Naive thymus-derived CD4-positive, alpha-beta T cell (primary cell): ENCODE measurements at regions of chr15 and their contacts with region 1.

Region 1: DNA sequence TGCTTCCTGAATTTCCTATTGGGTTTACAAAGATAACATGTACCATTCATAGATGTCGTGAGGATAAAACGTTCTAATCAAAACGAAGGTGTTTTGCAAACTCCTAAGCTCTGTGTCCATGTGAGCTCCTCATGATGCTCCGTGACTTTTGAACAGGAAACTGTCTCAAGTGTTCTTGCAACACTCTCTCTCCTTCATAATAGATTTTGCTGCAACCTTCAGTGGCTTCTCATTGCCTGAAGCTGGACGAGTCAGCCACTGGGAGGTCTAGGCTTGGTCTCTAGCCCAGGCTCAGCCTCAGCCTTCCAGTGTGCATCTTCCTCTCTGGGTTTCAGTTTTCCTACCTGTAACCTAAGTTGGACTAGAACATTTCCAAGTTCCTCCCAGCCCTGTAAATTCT is 18.7 kb upstream of the BCL2A1 start:
- DNase-seq: no peak
- ATAC-seq: peak; percentile 71
- H3K4me3 ChIP-seq: no peak overlapping the region
- H3K4me3 Mint-ChIP-seq: no peak overlapping the region
- H3K27ac ChIP-seq: no peak overlapping the region
- H3K27ac Mint-ChIP-seq: peak overlapping the region in 1 of 9 donors; percentile 9
- H3K4me1 ChIP-seq: no peaks in the 10 kb centered on the region
- H3K4me1 Mint-ChIP-seq: peaks cover 0 to 7% (median 5%) of the 10 kb centered on the region in 7 donors
- H3K27me3 ChIP-seq: no peaks in the 10 kb centered on the region
- H3K27me3 Mint-ChIP-seq: no peaks in the 10 kb centered on the region

Region 2: GRCh38 chr15:79380755-79381497 is 608.8 kb before region 1 on chr15:
- CTCF ChIA-PET with region 1: interaction called, 14 read pairs
- POLR2A ChIA-PET with region 1: no interaction called
- intact Hi-C with region 1: no loop called
- DNase-seq: peak; percentile 26 to 77 (median 62)
- ATAC-seq: peak; percentile 92
- H3K4me3 ChIP-seq: no peak overlapping the region
- H3K4me3 Mint-ChIP-seq: peak overlapping the region in 1 of 10 donors; percentile 36
- H3K27ac ChIP-seq: no peak overlapping the region
- H3K27ac Mint-ChIP-seq: peak overlapping the region in 2 of 9 donors; percentile 65 to 70
- H3K4me1 ChIP-seq: no peaks in the 10 kb centered on the region
- H3K4me1 Mint-ChIP-seq: peaks cover 0 to 5% (median 0%) of the 10 kb centered on the region in 7 donors
- H3K27me3 ChIP-seq: no peaks in the 10 kb centered on the region
- H3K27me3 Mint-ChIP-seq: no peaks in the 10 kb centered on the region

Region 3: GRCh38 chr15:79394231-79394630 is 595.5 kb before region 1 on chr15:
- CTCF ChIA-PET with region 1: no interaction called
- POLR2A ChIA-PET with region 1: no interaction called
- intact Hi-C with region 1: no loop called
- DNase-seq: no peak
- ATAC-seq: no peak
- H3K4me3 ChIP-seq: no peak overlapping the region
- H3K4me3 Mint-ChIP-seq: no peak overlapping the region
- H3K27ac ChIP-seq: no peak overlapping the region
- H3K27ac Mint-ChIP-seq: no peak overlapping the region
- H3K4me1 ChIP-seq: no peaks in the 10 kb centered on the region
- H3K4me1 Mint-ChIP-seq: no peaks in the 10 kb centered on the region
- H3K27me3 ChIP-seq: no peaks in the 10 kb centered on the region
- H3K27me3 Mint-ChIP-seq: peaks cover 0 to 5% (median 0%) of the 10 kb centered on the region in 5 donors

Region 4: GRCh38 chr15:79769069-79769481 is 220.6 kb before region 1 on chr15:
- CTCF ChIA-PET with region 1: no interaction called
- POLR2A ChIA-PET with region 1: no interaction called
- intact Hi-C with region 1: loop called in 1 of 2 experiments (anchors 1 kb)
- DNase-seq: peak in 1 of 9 donors; percentile 2
- ATAC-seq: no peak
- H3K4me3 ChIP-seq: no peak overlapping the region
- H3K4me3 Mint-ChIP-seq: no peak overlapping the region
- H3K27ac ChIP-seq: no peak overlapping the region
- H3K27ac Mint-ChIP-seq: no peak overlapping the region
- H3K4me1 ChIP-seq: no peaks in the 10 kb centered on the region
- H3K4me1 Mint-ChIP-seq: no peaks in the 10 kb centered on the region
- H3K27me3 ChIP-seq: no peaks in the 10 kb centered on the region
- H3K27me3 Mint-ChIP-seq: peaks cover 10 to 18% (median 16%) of the 10 kb centered on the region in 5 donors

Region 5: GRCh38 chr15:79896637-79897379 is 92.9 kb before region 1 on chr15 and contains the start of gene MTHFS:
- CTCF ChIA-PET with region 1: interaction called, 10 read pairs
- POLR2A ChIA-PET with region 1: interaction called, 27 read pairs
- intact Hi-C with region 1: loop called (anchors 1 kb)
- DNase-seq: peak; percentile 73 to 87 (median 83)
- ATAC-seq: peak; percentile 92
- H3K4me3 ChIP-seq: peak within 1 kb of the TSS; percentile 71
- H3K4me3 Mint-ChIP-seq: peak within 1 kb of the TSS; percentile 91 to 100 (median 99)
- H3K27ac ChIP-seq: peak within 1 kb of the TSS; percentile 92
- H3K27ac Mint-ChIP-seq: peak within 1 kb of the TSS; percentile 97 to 100 (median 100)
- H3K4me1 ChIP-seq: peaks cover 20 to 23% of the 10 kb centered on the region in 2 donors
- H3K4me1 Mint-ChIP-seq: peaks cover 28 to 49% (median 46%) of the 10 kb centered on the region in 7 donors
- H3K27me3 ChIP-seq: no peaks in the 10 kb centered on the region
- H3K27me3 Mint-ChIP-seq: no peaks in the 10 kb centered on the region
- total RNA-seq, gene MTHFS: 15.8 to 31.8 (median 20.3) TPM

Region 6: GRCh38 chr15:79923515-79924395 is 65.9 kb before region 1 on chr15:
- CTCF ChIA-PET with region 1: interaction called, 3 read pairs
- POLR2A ChIA-PET with region 1: interaction called, 5 read pairs
- intact Hi-C with region 1: loop called (anchors 1 kb)
- DNase-seq: peak; percentile 95 to 100 (median 99)
- ATAC-seq: peak; percentile 98
- H3K4me3 ChIP-seq: peak overlapping the region; percentile 98
- H3K4me3 Mint-ChIP-seq: peak overlapping the region; percentile 90 to 98 (median 94)
- H3K27ac ChIP-seq: peak overlapping the region; percentile 96
- H3K27ac Mint-ChIP-seq: peak overlapping the region; percentile 95 to 98 (median 97)
- H3K4me1 ChIP-seq: peaks cover 11 to 14% of the 10 kb centered on the region in 2 donors
- H3K4me1 Mint-ChIP-seq: peaks cover 9 to 30% (median 24%) of the 10 kb centered on the region in 7 donors
- H3K27me3 ChIP-seq: no peaks in the 10 kb centered on the region
- H3K27me3 Mint-ChIP-seq: no peaks in the 10 kb centered on the region

Region 7: GRCh38 chr15:79970624-79971434 is 18.9 kb before region 1 on chr15 and contains the start of gene BCL2A1:
- CTCF ChIA-PET with region 1: no interaction called
- POLR2A ChIA-PET with region 1: interaction called, 6 read pairs
- intact Hi-C with region 1: loop called (anchors 1 kb)
- DNase-seq: peak; percentile 30 to 85 (median 80)
- ATAC-seq: peak; percentile 91
- H3K4me3 ChIP-seq: peak within 1 kb of the TSS; percentile 81
- H3K4me3 Mint-ChIP-seq: peak within 1 kb of the TSS; percentile 88 to 98 (median 94)
- H3K27ac ChIP-seq: peak within 1 kb of the TSS; percentile 75
- H3K27ac Mint-ChIP-seq: peak within 1 kb of the TSS; percentile 93 to 99 (median 95)
- H3K4me1 ChIP-seq: peaks cover 27 to 39% of the 10 kb centered on the region in 2 donors
- H3K4me1 Mint-ChIP-seq: peaks cover 41 to 66% (median 58%) of the 10 kb centered on the region in 7 donors
- H3K27me3 ChIP-seq: no peaks in the 10 kb centered on the region
- H3K27me3 Mint-ChIP-seq: no peaks in the 10 kb centered on the region
- total RNA-seq, gene BCL2A1: 27.3 to 119 (median 31.0) TPM